Heart right ventricle (tissue), 16 donors: ENCODE measurements at regions of chr2 and their contacts with region 1.

Region 1: GRCh38 chr2:158753641-158754611 is 41.2 kb upstream of the DAPL1 start:
- DNase-seq: peak in 1 of 2 donors; percentile 48
- ATAC-seq: peak; percentile 85 to 95 (median 90)
- H3K4me3 ChIP-seq: peak overlapping the region in 9 of 10 donors; percentile 1 to 44 (median 40)
- H3K27ac ChIP-seq: peak overlapping the region in 4 of 10 donors; percentile 6 to 49 (median 23)
- H3K4me1 ChIP-seq: peaks cover 0 to 15% (median 9%) of the 10 kb centered on the region in 9 donors
- H3K27me3 ChIP-seq: no peaks in the 10 kb centered on the region
- CTCF ChIP-seq: peak; percentile 83 to 95 (median 90)

Region 2: GRCh38 chr2:158024288-158024898 is 729.5 kb before region 1 on chr2:
- intact Hi-C with region 1: loop called in 8 of 10 experiments (anchors 1 to 10 kb)
- DNase-seq: peak; percentile 30 to 38
- ATAC-seq: peak in 1 of 8 donors; percentile 49
- H3K4me3 ChIP-seq: no peak overlapping the region
- H3K27ac ChIP-seq: no peak overlapping the region
- H3K4me1 ChIP-seq: no peaks in the 10 kb centered on the region
- H3K27me3 ChIP-seq: no peaks in the 10 kb centered on the region
- CTCF ChIP-seq: peak; percentile 73 to 90 (median 85)

Region 3: DNA sequence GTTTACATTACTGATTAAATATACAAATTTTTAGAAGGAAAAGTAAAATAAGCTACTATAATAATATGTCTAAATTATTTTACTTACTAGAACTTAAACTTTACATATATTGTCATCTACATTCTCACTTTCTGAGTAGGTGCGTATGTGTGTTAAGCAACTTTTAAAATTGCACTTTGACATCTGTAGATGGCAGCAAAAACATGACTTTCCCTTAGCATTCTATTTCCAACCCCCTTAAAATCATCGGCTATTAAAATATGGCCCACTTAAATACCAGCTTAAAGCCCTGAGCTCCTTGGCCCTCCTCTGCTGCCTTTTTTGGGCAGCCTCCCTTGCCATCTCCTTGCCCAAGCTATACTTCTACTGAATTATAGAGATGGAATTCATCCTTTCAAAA is 574.3 kb before region 1 on chr2:
- intact Hi-C with region 1: loop called in 8 of 10 experiments (anchors 2 to 10 kb)
- DNase-seq: no peak
- ATAC-seq: peak in 6 of 8 donors; percentile 23 to 75 (median 51)
- H3K4me3 ChIP-seq: no peak overlapping the region
- H3K27ac ChIP-seq: no peak overlapping the region
- H3K4me1 ChIP-seq: peaks cover 0 to 18% (median 4%) of the 10 kb centered on the region in 9 donors
- H3K27me3 ChIP-seq: peaks cover 0 to 3% (median 0%) of the 10 kb centered on the region in 7 donors
- CTCF ChIP-seq: peak in 7 of 9 donors; percentile 44 to 66 (median 60)

Region 4: DNA sequence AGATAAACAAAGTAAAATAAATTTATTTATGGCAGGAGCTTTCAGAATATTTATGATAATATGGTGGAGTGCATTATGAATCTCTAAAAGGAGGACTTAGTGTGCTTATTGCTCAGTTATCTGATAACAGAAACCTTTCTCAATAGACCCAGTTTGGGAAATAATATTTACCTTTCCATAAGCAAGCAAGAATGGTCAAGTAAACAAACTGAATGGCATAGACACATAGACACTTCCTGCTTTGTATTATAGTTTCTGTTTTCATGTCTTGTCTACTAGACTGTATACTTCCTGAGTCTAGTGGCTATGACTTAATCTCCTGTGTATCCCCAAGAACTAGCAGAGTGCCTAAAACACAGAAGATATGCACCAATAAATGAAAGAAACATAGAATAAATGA is 564.4 kb before region 1 on chr2:
- intact Hi-C with region 1: loop called in 5 of 10 experiments (anchors 5 to 10 kb)
- DNase-seq: no peak
- ATAC-seq: no peak
- H3K4me3 ChIP-seq: no peak overlapping the region
- H3K27ac ChIP-seq: no peak overlapping the region
- H3K4me1 ChIP-seq: peaks cover 0 to 29% (median 7%) of the 10 kb centered on the region in 9 donors
- H3K27me3 ChIP-seq: no peaks in the 10 kb centered on the region
- CTCF ChIP-seq: no peak

Region 5: GRCh38 chr2:158667586-158667985 is 86.3 kb before region 1 on chr2:
- intact Hi-C with region 1: loop called in 4 of 10 experiments (anchors 5 to 10 kb)
- DNase-seq: no peak
- ATAC-seq: peak; percentile 42 to 79 (median 64)
- H3K4me3 ChIP-seq: no peak overlapping the region
- H3K27ac ChIP-seq: peak overlapping the region in 7 of 10 donors; percentile 28 to 77 (median 62)
- H3K4me1 ChIP-seq: peaks cover 3 to 66% (median 36%) of the 10 kb centered on the region in 9 donors
- H3K27me3 ChIP-seq: no peaks in the 10 kb centered on the region
- CTCF ChIP-seq: no peak

Region 6: DNA sequence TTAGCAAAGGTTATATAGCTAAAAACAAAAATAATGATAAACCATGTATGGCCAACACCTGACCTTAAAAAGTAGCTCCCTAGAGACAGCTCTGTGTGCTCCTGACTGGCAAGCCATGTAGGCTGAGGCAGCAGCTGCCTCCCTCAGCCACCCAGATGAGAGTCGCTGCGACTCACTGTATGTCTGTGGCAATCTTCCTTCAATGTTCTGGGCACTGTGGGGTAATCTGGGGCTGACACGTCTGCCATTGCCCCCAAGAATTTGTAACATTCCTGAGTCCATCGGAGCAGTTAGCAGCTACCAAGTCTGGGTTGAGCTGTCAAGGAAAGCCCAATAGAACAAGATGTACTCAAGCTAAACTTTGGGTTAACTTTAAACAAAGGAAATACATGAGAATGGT is 65.2 kb before region 1 on chr2:
- intact Hi-C with region 1: no loop called
- DNase-seq: no peak
- ATAC-seq: no peak
- H3K4me3 ChIP-seq: no peak overlapping the region
- H3K27ac ChIP-seq: no peak overlapping the region
- H3K4me1 ChIP-seq: peaks cover 0 to 20% (median 8%) of the 10 kb centered on the region in 9 donors
- H3K27me3 ChIP-seq: no peaks in the 10 kb centered on the region
- CTCF ChIP-seq: no peak